ENCODE measurements at regions of chr16 and their contacts with region 1.

Region 1: DNA sequence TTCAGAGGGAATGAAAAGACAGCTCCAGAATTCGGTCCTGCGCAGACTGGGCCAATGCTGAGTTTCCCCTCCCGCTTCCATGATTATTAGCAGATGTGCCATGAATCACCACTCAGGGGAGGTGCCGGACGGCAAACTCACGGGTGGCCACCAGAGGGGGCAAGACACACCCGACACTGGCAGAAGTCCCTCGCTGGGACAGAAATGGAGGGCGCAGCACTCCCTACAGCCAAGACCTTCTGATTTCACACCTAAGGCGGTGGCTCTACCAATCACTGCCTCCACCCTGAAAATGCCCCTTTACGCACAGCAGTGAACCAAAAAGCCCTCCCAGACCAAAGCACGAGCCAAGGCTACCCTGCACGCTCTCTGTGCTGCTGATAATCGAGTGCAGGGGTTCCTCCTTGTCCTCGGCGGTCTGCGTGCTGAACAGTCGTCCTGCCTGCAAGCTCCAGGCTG is 26.8 kb downstream of the TRAP1 start:
- DNase-seq: peak; percentile 93
- H3K4me3 ChIP-seq: no peak overlapping the region; a peak in 1 of 4 replicates
- H3K27ac ChIP-seq: no peak overlapping the region; a peak in 1 of 4 replicates
- H3K4me1 ChIP-seq: peaks cover 5 to 6% of the 10 kb centered on the region in 2 experiments; a peak in 3 of 4 replicates
- H3K27me3 ChIP-seq: no peaks in the 10 kb centered on the region
- CTCF ChIP-seq: peak; percentile 95
- EP300 ChIP-seq: peak in 1 of 2 experiments; percentile 24; a peak in 1 of 4 replicates
- RAD21 ChIP-seq: peak; percentile 83

Region 2: DNA sequence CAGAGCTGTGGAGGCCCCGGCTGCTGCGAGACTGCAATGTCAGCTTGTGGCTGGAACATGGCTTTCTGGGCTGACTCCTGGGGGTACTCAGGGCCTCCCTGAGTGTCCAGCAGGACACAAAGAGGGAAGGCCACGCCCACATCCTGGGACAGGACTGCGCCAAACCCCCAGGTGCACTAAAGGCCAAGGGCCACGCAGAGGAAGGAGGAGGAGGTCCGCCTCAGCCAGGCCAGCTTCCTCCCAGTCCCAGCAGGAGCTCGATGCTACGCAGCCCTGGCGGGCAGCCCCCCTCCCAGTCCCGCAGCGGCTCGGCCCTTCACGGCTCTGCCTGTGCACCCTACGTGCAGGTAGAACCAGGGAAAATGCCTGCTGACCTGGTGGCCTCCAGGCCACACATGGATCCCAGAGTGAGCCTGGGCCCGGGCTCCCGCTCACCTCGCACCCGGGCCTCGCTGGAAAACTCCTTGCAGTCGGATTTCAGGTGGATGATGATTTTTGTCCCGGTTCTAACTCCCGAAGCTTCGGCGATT is 14.8 kb before region 1 on chr16:
- CTCF ChIA-PET with region 1: interaction called, 11 read pairs
- POLR2A ChIA-PET with region 1: no interaction called
- DNase-seq: peak; percentile 16
- H3K4me3 ChIP-seq: no peak overlapping the region
- H3K27ac ChIP-seq: no peak overlapping the region
- H3K4me1 ChIP-seq: no peaks in the 10 kb centered on the region
- H3K27me3 ChIP-seq: no peaks in the 10 kb centered on the region
- CTCF ChIP-seq: no peak
- EP300 ChIP-seq: no peak
- RAD21 ChIP-seq: no peak

Region 3: DNA sequence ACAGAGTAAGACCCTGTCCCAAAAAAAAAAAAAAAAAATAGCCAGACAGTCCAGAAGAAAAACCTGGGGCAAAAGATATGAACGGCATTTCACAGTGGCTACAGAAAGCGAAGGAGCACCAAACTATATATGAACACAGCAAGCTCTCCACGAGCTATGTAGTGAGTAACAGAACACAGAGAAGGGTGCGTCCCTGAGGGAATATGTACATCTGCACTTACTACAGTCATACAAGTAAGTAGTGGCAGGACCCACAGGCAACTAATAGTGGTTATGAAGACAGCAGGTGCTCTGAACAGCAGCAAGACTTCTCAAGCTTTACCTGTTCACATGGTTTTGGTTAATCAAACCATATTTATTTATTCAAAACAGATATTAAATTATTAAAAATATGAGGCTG is 11.0 kb after region 1 on chr16:
- CTCF ChIA-PET with region 1: interaction called, 18 read pairs
- POLR2A ChIA-PET with region 1: no interaction called
- DNase-seq: no peak
- H3K4me3 ChIP-seq: no peak overlapping the region
- H3K27ac ChIP-seq: no peak overlapping the region
- H3K4me1 ChIP-seq: no peaks in the 10 kb centered on the region; a peak in 1 of 4 replicates
- H3K27me3 ChIP-seq: no peaks in the 10 kb centered on the region
- CTCF ChIP-seq: no peak
- EP300 ChIP-seq: no peak
- RAD21 ChIP-seq: no peak

Region 4: GRCh38 chr16:3717235-3718018 is 26.9 kb after region 1 on chr16 and contains the start of gene TRAP1:
- CTCF ChIA-PET with region 1: interaction called, 19 read pairs
- POLR2A ChIA-PET with region 1: interaction called, 3 read pairs
- DNase-seq: peak; percentile 99
- H3K4me3 ChIP-seq: peak within 1 kb of the TSS; percentile 82 to 96
- H3K27ac ChIP-seq: peak within 1 kb of the TSS; percentile 54 to 78
- H3K4me1 ChIP-seq: peaks cover 8% of the 10 kb centered on the region in 2 experiments; a peak in 1 of 4 replicates
- H3K27me3 ChIP-seq: no peaks in the 10 kb centered on the region
- CTCF ChIP-seq: no peak
- EP300 ChIP-seq: no peak
- RAD21 ChIP-seq: no peak
- polyA plus RNA-seq, gene TRAP1: 129 and 133 TPM in 2 replicates

Region 5: GRCh38 chr16:3773663-3774062 is 83.2 kb after region 1 on chr16:
- CTCF ChIA-PET with region 1: no interaction called
- POLR2A ChIA-PET with region 1: no interaction called
- DNase-seq: no peak
- H3K4me3 ChIP-seq: no peak overlapping the region
- H3K27ac ChIP-seq: no peak overlapping the region
- H3K4me1 ChIP-seq: no peaks in the 10 kb centered on the region; a peak in 1 of 4 replicates
- H3K27me3 ChIP-seq: no peaks in the 10 kb centered on the region
- CTCF ChIP-seq: no peak
- EP300 ChIP-seq: no peak
- RAD21 ChIP-seq: no peak

Region 6: GRCh38 chr16:3879887-3880564 is 189.5 kb after region 1 on chr16:
- CTCF ChIA-PET with region 1: interaction called, 12 read pairs
- POLR2A ChIA-PET with region 1: interaction called, 4 read pairs
- DNase-seq: peak; percentile 91
- H3K4me3 ChIP-seq: peak overlapping the region; percentile 83
- H3K27ac ChIP-seq: peak overlapping the region in 1 of 2 experiments; percentile 86; a peak in 2 of 4 replicates
- H3K4me1 ChIP-seq: peaks cover 8 to 26% of the 10 kb centered on the region in 2 experiments; a peak in 3 of 4 replicates
- H3K27me3 ChIP-seq: no peaks in the 10 kb centered on the region
- CTCF ChIP-seq: no peak
- EP300 ChIP-seq: no peak
- RAD21 ChIP-seq: peak; percentile 39; the same call in 1 of the 2 replicates